ENCODE measurements at regions of chr22 and their contacts with region 1.

Region 1: DNA sequence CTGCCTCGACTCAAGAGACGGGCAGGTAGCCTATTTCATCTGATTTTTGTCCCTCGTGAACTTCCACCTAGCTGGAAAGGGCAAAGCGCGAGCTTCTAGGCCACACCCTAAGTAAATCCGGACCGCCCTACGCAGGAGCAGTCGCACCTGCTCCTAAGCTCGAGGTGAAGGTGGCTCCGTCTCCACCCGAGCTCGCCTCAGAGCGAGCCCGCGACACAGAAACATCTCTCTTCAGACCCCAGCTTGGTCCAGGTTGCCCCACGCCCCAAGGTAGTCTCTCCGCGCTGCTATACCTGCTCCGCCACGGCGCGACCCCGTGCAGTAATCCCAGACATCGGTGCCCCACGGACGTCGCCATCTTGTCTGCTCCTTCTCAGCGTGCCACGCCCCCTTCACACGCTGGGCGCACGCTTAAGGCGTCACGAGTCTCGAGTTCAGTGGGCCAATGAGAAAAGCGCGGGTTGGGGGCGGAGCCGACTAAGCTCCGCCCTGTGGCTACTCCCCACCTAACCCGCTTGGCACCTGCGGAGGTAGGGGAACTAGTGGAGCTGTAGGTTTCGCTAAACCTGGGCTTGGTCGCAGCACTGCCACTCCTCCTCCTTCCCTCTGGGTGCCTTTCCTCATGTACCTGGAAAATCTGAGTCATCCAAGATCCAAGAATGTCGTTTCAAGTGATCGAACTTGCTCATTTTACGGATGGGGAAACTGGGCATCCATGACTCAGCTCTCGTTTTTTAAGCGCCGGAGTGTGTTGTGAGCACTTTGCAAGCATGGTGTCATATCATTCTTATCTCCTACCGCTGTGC is at the start of gene PISD:
- DNase-seq: peak; percentile 96
- H3K4me3 ChIP-seq: peak within 1 kb of the TSS; percentile 69 to 92 (median 90)
- H3K27ac ChIP-seq: peak within 1 kb of the TSS; percentile 63
- H3K4me1 ChIP-seq: peaks cover 11% of the 10 kb centered on the region
- H3K27me3 ChIP-seq: no peaks in the 10 kb centered on the region
- CTCF ChIP-seq: no peak
- POLR2A ChIP-seq: peak; percentile 68
- total RNA-seq, gene PISD: 53.2 and 58.0 TPM in 2 replicates

Region 2: DNA sequence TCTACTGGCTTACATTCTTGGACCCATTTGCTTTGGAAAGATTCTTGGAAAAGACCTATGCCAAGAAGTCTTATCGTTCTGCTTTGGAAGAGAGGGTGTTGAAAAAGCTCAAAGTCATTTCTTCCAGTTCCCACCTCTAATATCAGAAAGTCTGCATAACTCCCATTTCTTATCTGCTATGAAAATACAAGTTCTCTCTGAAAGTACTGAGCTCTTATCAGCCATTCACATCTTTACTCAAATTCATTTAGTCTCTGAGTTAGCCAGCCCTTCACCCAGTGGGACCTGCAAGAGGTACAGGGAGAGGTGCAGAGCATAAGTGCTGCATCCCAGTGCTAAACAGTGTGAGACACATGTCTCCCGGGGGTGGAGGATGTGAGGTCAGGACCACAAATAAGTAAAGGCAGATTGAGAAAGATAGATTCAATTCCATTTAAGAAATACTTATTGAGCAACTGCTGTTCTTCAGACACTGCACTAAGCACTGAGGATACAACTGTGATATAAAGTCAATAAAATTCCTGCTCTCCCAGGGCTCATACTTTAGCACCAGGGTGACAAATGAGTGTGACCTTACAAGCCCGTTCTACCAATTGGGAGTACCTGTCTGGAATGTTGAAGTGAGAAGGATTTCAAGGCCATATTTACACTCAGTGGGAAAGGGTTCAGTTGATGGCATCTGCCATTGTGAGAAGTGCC is 76.7 kb before region 1 on chr22:
- CTCF ChIA-PET with region 1: no interaction called
- POLR2A ChIA-PET with region 1: no interaction called
- dilution Hi-C with region 1: no loop called
- intact Hi-C with region 1: no loop called
- DNase-seq: no peak
- H3K4me3 ChIP-seq: no peak overlapping the region
- H3K27ac ChIP-seq: no peak overlapping the region
- H3K4me1 ChIP-seq: peaks cover 22% of the 10 kb centered on the region
- H3K27me3 ChIP-seq: no peaks in the 10 kb centered on the region
- CTCF ChIP-seq: no peak
- POLR2A ChIP-seq: no peak

Region 3: DNA sequence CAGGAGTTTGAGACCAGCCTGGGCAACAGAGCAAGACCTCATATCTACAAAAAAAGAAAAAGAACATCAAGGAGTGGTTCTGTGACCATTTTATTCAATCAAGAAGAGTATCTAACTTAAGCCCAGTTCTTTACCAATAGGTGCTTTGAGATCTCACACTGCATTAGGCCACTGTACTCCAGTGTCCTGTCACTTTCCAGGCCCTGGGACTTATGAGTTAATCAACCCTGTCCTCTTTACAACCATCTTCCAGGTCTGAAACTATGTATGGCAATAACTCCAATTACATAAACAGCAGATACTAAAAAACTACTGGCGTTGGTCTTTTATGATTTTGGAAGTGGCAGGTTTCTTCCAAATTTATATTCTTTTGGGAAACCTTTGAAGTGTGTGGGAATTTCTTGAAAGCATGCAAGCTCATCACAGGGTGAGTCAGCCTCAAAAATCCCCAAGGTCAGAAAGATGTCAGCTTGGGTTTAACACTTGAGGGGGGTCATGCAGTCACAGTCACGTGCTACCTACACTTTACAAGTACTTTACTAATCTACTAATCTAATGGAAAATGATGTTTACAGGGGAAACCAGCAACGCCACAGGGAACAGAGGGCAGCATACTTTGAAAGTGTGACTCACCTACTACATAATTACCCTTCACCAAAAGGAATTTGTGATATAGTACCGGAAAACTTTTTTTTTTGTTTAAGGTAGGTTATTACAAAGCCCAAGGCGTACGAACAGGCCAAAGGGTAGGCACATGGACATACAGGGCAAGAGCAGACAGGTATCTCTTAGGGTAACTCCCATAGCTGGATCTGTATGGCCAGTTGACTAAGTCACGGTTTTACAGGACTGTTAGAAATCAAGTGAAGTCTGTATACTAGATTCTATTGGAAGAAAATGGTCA is 15.6 kb before region 1 on chr22:
- CTCF ChIA-PET with region 1: interaction called, 4 read pairs
- POLR2A ChIA-PET with region 1: no interaction called
- dilution Hi-C with region 1: no loop called
- intact Hi-C with region 1: loop called (anchors 1 kb)
- DNase-seq: peak; percentile 96
- H3K4me3 ChIP-seq: no peak overlapping the region
- H3K27ac ChIP-seq: peak overlapping the region; percentile 97
- H3K4me1 ChIP-seq: peaks cover 31% of the 10 kb centered on the region
- H3K27me3 ChIP-seq: no peaks in the 10 kb centered on the region
- CTCF ChIP-seq: no peak
- POLR2A ChIP-seq: no peak

Region 4: DNA sequence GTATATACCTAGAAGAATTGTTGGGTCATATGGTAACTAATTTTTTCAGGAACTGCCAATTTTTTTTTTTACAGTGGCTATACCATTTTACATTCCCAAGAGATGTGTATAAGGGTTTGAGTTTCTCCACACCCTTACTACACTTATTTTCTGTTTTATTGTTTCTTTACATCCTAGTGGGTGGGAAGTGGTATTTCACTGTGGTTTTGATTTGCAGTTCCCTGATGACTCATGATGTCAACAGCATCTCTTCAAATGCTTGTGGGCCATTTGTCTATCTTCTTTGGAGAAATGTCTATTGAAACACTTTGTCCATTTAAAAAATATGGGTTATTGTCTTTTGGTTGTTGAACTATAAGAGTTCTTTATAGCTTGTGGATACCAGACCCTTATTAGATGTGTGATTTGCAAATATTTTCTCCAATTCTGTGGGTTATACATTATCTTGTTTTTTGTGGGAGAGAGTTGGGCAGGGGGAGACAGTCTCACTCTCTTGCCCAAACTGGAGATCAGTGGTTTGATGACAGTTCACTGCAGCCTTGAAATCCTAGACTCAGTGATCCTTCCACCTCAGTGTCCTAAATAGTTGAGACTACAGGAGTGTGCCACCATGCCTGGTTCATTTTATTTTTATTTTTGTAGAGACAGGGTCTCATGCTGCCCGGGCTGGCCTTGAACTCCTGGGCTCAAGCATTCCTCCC is 30.3 kb after region 1 on chr22:
- CTCF ChIA-PET with region 1: interaction called, 10 read pairs
- POLR2A ChIA-PET with region 1: interaction called, 8 read pairs
- dilution Hi-C with region 1: no loop called
- intact Hi-C with region 1: no loop called
- DNase-seq: no peak
- H3K4me3 ChIP-seq: no peak overlapping the region
- H3K27ac ChIP-seq: no peak overlapping the region
- H3K4me1 ChIP-seq: peaks cover 3% of the 10 kb centered on the region
- H3K27me3 ChIP-seq: no peaks in the 10 kb centered on the region
- CTCF ChIP-seq: no peak
- POLR2A ChIP-seq: no peak

Region 5: GRCh38 chr22:31943976-31944699 is 282.1 kb after region 1 on chr22 and contains the start of gene YWHAH:
- CTCF ChIA-PET with region 1: interaction called, 26 read pairs
- POLR2A ChIA-PET with region 1: no interaction called
- dilution Hi-C with region 1: no loop called
- intact Hi-C with region 1: loop called (anchors 1 kb)
- DNase-seq: peak; percentile 95
- H3K4me3 ChIP-seq: peak within 1 kb of the TSS; percentile 94 to 100 (median 96)
- H3K27ac ChIP-seq: peak within 1 kb of the TSS; percentile 74
- H3K4me1 ChIP-seq: peaks cover 24% of the 10 kb centered on the region
- H3K27me3 ChIP-seq: no peaks in the 10 kb centered on the region
- CTCF ChIP-seq: no peak
- POLR2A ChIP-seq: peak; percentile 90
- total RNA-seq, gene YWHAH: 170 and 182 TPM in 2 replicates

Region 6: DNA sequence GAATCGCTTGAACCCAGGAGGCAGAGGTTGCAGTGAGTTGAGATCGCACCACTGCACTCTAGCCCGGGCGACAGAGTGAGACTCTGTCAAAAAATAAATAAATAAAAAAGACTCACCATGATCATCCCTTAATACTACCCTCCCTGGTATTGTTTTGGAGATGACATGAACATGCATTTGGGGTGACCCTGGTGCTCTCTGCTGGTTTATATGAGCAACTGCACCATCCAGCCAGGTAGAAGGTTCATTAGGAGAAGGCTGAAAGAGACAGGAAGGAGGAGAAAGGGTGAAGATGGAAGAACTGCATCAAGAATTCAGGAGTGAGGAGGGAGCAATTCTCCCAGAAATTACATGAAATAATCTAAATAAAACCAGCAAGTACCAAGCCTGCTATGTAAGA is 418.9 kb after region 1 on chr22:
- CTCF ChIA-PET with region 1: interaction called, 24 read pairs
- POLR2A ChIA-PET with region 1: no interaction called
- dilution Hi-C with region 1: no loop called
- intact Hi-C with region 1: loop called (anchors 1 kb)
- DNase-seq: peak; percentile 11
- H3K4me3 ChIP-seq: no peak overlapping the region
- H3K27ac ChIP-seq: no peak overlapping the region
- H3K4me1 ChIP-seq: no peaks in the 10 kb centered on the region
- H3K27me3 ChIP-seq: peaks cover 0 to 5% of the 10 kb centered on the region in 2 experiments
- CTCF ChIP-seq: peak; percentile 36 to 46
- POLR2A ChIP-seq: no peak